B cell (primary cell): ENCODE measurements at regions of chr11 and their contacts with region 1.

Region 1: DNA sequence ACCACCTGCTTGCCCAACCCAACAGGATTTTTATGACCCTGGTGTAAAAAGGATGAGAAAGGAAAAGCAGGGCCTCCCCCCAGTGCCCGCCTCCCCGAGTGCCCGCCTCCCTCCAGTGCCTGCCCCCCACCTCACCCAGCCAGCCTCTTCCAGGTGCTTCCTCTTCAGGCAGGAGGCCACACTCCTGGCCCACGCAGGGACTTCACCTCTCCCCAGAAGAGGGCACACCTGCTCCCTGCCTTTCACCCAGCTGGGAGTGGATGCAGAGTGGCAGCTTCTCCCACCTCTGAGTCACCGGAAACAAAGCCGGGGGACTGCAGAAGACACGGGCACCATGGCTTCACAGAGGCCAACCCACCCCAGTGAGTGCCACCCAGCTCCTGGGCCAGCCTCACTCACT is 16.1 kb downstream of the CPT1A start:
- DNase-seq: peak; percentile 70
- ATAC-seq: peak; percentile 82
- H3K4me3 ChIP-seq: no peak overlapping the region
- H3K4me3 Mint-ChIP-seq: peak overlapping the region; percentile 34
- H3K27ac ChIP-seq: no peak overlapping the region
- H3K27ac Mint-ChIP-seq: peak overlapping the region; percentile 37
- H3K4me1 ChIP-seq: peaks cover 29 to 36% of the 10 kb centered on the region in 2 donors
- H3K4me1 Mint-ChIP-seq: peaks cover 48% of the 10 kb centered on the region
- H3K27me3 ChIP-seq: no peaks in the 10 kb centered on the region
- H3K27me3 Mint-ChIP-seq: no peaks in the 10 kb centered on the region
- CTCF ChIP-seq: peak; percentile 17

Region 2: GRCh38 chr11:68869251-68869960 is 43.8 kb after region 1 on chr11:
- CTCF ChIA-PET with region 1: no interaction called
- POLR2A ChIA-PET with region 1: interaction called, 11 read pairs
- intact Hi-C with region 1: no loop called
- DNase-seq: peak; percentile 25
- ATAC-seq: peak; percentile 36
- H3K4me3 ChIP-seq: peak overlapping the region in 2 of 5 experiments; percentile 21 to 23
- H3K4me3 Mint-ChIP-seq: peak overlapping the region; percentile 84
- H3K27ac ChIP-seq: no peak overlapping the region
- H3K27ac Mint-ChIP-seq: no peak overlapping the region
- H3K4me1 ChIP-seq: peaks cover 7 to 8% of the 10 kb centered on the region in 2 donors
- H3K4me1 Mint-ChIP-seq: peaks cover 13% of the 10 kb centered on the region
- H3K27me3 ChIP-seq: peaks cover 0 to 19% (median 11%) of the 10 kb centered on the region in 4 experiments
- H3K27me3 Mint-ChIP-seq: peaks cover 30% of the 10 kb centered on the region
- CTCF ChIP-seq: no peak